ENCODE measurements at regions of chr4 and their contacts with region 1.

Region 1: GRCh38 chr4:79088946-79089691 is 149.9 kb upstream of the PAQR3 start:
- DNase-seq: no peak
- ATAC-seq: no peak
- H3K4me3 ChIP-seq: no peak overlapping the region
- H3K4me3 Mint-ChIP-seq: no peak overlapping the region
- H3K27ac ChIP-seq: no peak overlapping the region
- H3K27ac Mint-ChIP-seq: no peak overlapping the region
- H3K4me1 ChIP-seq: no peaks in the 10 kb centered on the region
- H3K4me1 Mint-ChIP-seq: no peaks in the 10 kb centered on the region
- H3K27me3 ChIP-seq: no peaks in the 10 kb centered on the region
- H3K27me3 Mint-ChIP-seq: no peaks in the 10 kb centered on the region
- CTCF ChIP-seq: no peak

Region 2: DNA sequence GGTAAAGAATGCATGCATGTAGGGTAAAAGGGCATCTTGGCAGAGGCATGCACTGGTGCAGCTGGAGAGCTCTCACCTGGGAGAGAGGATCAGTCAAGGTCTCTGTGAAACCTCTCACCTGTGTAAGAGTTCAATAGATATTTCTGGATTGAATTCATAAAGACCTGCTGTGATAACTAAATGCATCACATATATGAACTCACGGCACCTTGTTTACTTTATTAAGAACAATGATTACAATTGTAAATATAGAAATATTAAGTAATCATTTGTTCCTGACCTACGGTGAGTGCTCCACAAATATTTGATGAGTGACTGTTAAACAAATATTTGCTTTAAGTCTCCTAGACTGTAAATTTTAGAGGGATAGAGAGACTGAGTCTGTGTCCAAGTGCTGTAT is 63.9 kb before region 1 on chr4:
- CTCF ChIA-PET with region 1: no interaction called
- POLR2A ChIA-PET with region 1: no interaction called
- intact Hi-C with region 1: no loop called
- DNase-seq: no peak
- ATAC-seq: no peak
- H3K4me3 ChIP-seq: no peak overlapping the region
- H3K4me3 Mint-ChIP-seq: no peak overlapping the region
- H3K27ac ChIP-seq: no peak overlapping the region
- H3K27ac Mint-ChIP-seq: no peak overlapping the region
- H3K4me1 ChIP-seq: no peaks in the 10 kb centered on the region
- H3K4me1 Mint-ChIP-seq: no peaks in the 10 kb centered on the region
- H3K27me3 ChIP-seq: no peaks in the 10 kb centered on the region
- H3K27me3 Mint-ChIP-seq: no peaks in the 10 kb centered on the region
- CTCF ChIP-seq: no peak

Region 3: GRCh38 chr4:79141530-79141929 is 52.4 kb after region 1 on chr4:
- CTCF ChIA-PET with region 1: no interaction called
- POLR2A ChIA-PET with region 1: no interaction called
- intact Hi-C with region 1: loop called in 1 of 2 experiments (anchors 1 kb)
- DNase-seq: no peak
- ATAC-seq: no peak
- H3K4me3 ChIP-seq: no peak overlapping the region
- H3K4me3 Mint-ChIP-seq: no peak overlapping the region
- H3K27ac ChIP-seq: no peak overlapping the region
- H3K27ac Mint-ChIP-seq: no peak overlapping the region
- H3K4me1 ChIP-seq: no peaks in the 10 kb centered on the region
- H3K4me1 Mint-ChIP-seq: no peaks in the 10 kb centered on the region
- H3K27me3 ChIP-seq: no peaks in the 10 kb centered on the region
- H3K27me3 Mint-ChIP-seq: peaks cover 2% of the 10 kb centered on the region
- CTCF ChIP-seq: no peak